Tibial artery (tissue), 4 donors: ENCODE measurements at regions of chr11 and their contacts with region 1.

Region 1: GRCh38 chr11:117819096-117820040 is 5.2 kb downstream of the FXYD2 start:
- DNase-seq: peak in 1 of 2 donors; percentile 54
- H3K4me3 ChIP-seq: no peak overlapping the region
- H3K27ac ChIP-seq: no peak overlapping the region
- H3K4me1 ChIP-seq: peaks cover 0 to 16% (median 4%) of the 10 kb centered on the region in 4 donors
- H3K27me3 ChIP-seq: peaks cover 0 to 25% of the 10 kb centered on the region in 2 donors
- CTCF ChIP-seq: no peak

Region 2: DNA sequence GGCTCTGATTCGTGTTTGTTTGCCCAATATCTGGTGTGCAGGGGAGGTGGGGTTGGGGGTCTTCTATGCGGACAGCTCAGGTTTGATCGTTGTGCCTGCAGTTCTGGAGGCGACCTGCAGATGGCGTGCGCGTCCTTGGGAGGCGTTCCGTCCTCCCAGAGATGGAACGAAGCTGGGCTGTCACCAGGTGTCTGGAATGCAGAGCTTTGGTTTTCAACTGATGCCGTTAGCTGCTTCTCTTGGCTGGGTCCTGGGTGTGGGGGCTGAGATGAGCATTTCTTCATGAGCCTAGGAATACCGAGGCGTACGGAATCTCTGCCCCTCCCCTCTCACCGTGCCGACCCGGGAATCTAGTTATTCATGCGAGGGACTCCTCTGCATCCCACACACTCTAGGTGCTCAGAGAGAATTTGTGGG is 393.1 kb before region 1 on chr11:
- intact Hi-C with region 1: loop called (anchors 5 kb)
- DNase-seq: peak; percentile 40 to 69
- H3K4me3 ChIP-seq: no peak overlapping the region
- H3K27ac ChIP-seq: no peak overlapping the region
- H3K4me1 ChIP-seq: peaks cover 0 to 6% (median 0%) of the 10 kb centered on the region in 4 donors
- H3K27me3 ChIP-seq: peaks cover 0 to 32% of the 10 kb centered on the region in 2 donors
- CTCF ChIP-seq: peak; percentile 77 to 90

Region 3: GRCh38 chr11:117786135-117786890 is 33.1 kb before region 1 on chr11:
- intact Hi-C with region 1: no loop called
- DNase-seq: no peak
- H3K4me3 ChIP-seq: no peak overlapping the region
- H3K27ac ChIP-seq: no peak overlapping the region
- H3K4me1 ChIP-seq: no peaks in the 10 kb centered on the region
- H3K27me3 ChIP-seq: peaks cover 0 to 45% of the 10 kb centered on the region in 2 donors
- CTCF ChIP-seq: no peak